Calu3 (cell line): ENCODE measurements at regions of chr5 and their contacts with region 1.

Region 1: DNA sequence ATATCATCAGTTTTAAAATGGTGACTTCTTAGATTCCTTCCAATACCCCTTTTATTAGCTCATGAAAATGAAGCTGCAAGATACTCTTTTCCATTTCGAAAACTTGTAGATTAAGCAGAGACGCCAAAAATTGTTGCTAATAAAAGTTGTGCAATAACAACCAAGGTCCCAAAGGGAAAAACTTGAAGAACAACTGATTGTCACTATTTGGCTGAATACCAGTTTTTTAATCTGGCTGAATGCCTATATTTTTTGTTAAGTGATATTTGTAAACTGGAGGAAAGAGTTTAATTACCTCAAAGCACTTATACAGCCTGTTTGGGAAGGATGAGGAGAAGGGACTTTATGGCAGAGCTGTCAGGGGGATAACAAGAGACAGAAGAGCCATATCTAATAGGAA is 14.6 kb downstream of the C5orf58 start:
- DNase-seq: no peak
- H3K4me3 Mint-ChIP-seq: no peak overlapping the region
- H3K27ac Mint-ChIP-seq: no peak overlapping the region
- H3K4me1 Mint-ChIP-seq: peaks cover 35% of the 10 kb centered on the region
- H3K27me3 Mint-ChIP-seq: peaks cover 19% of the 10 kb centered on the region
- CTCF ChIP-seq: no peak

Region 2: GRCh38 chr5:170235876-170236864 is 11.2 kb before region 1 on chr5:
- CTCF ChIA-PET with region 1: no interaction called
- intact Hi-C with region 1: loop called (anchors 1 kb)
- DNase-seq: no peak
- H3K4me3 Mint-ChIP-seq: no peak overlapping the region
- H3K27ac Mint-ChIP-seq: no peak overlapping the region
- H3K4me1 Mint-ChIP-seq: no peaks in the 10 kb centered on the region
- H3K27me3 Mint-ChIP-seq: peaks cover 36% of the 10 kb centered on the region
- CTCF ChIP-seq: no peak

Region 3: GRCh38 chr5:170287532-170287931 is 40.2 kb after region 1 on chr5:
- CTCF ChIA-PET with region 1: no interaction called
- intact Hi-C with region 1: no loop called
- DNase-seq: no peak
- H3K4me3 Mint-ChIP-seq: no peak overlapping the region
- H3K27ac Mint-ChIP-seq: no peak overlapping the region
- H3K4me1 Mint-ChIP-seq: no peaks in the 10 kb centered on the region
- H3K27me3 Mint-ChIP-seq: peaks cover 100% of the 10 kb centered on the region
- CTCF ChIP-seq: no peak